Heart right ventricle (tissue), 16 donors: ENCODE measurements at regions of chr10 and their contacts with region 1.

Region 1: DNA sequence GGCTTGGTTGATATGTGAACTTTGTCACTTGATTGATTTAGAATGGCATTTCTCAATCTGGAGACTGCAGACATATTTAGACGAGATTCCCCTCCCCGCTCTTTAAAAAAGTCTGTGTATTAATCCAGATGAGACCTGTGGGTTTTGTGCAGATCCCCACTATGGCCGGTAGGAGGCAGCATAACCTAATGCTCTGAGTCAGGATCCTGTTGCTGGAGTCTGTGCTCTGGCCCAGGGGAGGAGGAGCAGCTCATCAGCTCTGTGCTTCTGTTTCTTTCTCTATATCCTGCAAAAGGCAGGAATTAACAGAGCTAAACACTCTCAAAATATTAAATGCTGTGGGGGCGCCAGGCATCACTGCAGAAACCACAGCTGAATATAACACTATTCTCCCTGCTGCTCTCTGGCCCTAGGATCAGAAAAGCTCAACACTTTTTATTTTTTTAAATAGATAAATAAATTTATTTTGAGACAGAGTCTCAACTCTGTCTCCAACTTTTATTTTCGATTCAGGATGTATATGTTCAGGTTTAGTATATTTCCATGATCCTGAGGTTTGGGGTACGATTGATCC is 23.9 kb upstream of the SEPHS1 start:
- DNase-seq: peak; percentile 28 to 68
- ATAC-seq: peak; percentile 84 to 95 (median 93)
- H3K4me3 ChIP-seq: no peak overlapping the region
- H3K27ac ChIP-seq: no peak overlapping the region
- H3K4me1 ChIP-seq: no peaks in the 10 kb centered on the region
- H3K27me3 ChIP-seq: no peaks in the 10 kb centered on the region
- CTCF ChIP-seq: peak; percentile 85 to 95 (median 90)

Region 2: GRCh38 chr10:13099666-13100348 is 272.2 kb before region 1 on chr10 and contains the start of gene OPTN:
- intact Hi-C with region 1: no loop called
- DNase-seq: peak; percentile 80 to 84
- ATAC-seq: peak; percentile 89 to 95 (median 93)
- H3K4me3 ChIP-seq: peak within 1 kb of the TSS; percentile 83 to 99 (median 96)
- H3K27ac ChIP-seq: peak within 1 kb of the TSS; percentile 87 to 99 (median 97)
- H3K4me1 ChIP-seq: peaks cover 2 to 43% (median 39%) of the 10 kb centered on the region in 9 donors
- H3K27me3 ChIP-seq: no peaks in the 10 kb centered on the region
- CTCF ChIP-seq: peak; percentile 38 to 85 (median 67)
- total RNA-seq, gene OPTN: 111 to 218 (median 133) TPM

Region 3: GRCh38 chr10:13234172-13234571 is 137.8 kb before region 1 on chr10 and contains the start of gene UCMA:
- intact Hi-C with region 1: no loop called
- DNase-seq: no peak
- ATAC-seq: no peak
- H3K4me3 ChIP-seq: no peak within 1 kb of the TSS
- H3K27ac ChIP-seq: no peak within 1 kb of the TSS
- H3K4me1 ChIP-seq: no peaks in the 10 kb centered on the region
- H3K27me3 ChIP-seq: peaks cover 0 to 31% (median 14%) of the 10 kb centered on the region in 7 donors
- CTCF ChIP-seq: no peak
- total RNA-seq, gene UCMA: not detected

Region 4: DNA sequence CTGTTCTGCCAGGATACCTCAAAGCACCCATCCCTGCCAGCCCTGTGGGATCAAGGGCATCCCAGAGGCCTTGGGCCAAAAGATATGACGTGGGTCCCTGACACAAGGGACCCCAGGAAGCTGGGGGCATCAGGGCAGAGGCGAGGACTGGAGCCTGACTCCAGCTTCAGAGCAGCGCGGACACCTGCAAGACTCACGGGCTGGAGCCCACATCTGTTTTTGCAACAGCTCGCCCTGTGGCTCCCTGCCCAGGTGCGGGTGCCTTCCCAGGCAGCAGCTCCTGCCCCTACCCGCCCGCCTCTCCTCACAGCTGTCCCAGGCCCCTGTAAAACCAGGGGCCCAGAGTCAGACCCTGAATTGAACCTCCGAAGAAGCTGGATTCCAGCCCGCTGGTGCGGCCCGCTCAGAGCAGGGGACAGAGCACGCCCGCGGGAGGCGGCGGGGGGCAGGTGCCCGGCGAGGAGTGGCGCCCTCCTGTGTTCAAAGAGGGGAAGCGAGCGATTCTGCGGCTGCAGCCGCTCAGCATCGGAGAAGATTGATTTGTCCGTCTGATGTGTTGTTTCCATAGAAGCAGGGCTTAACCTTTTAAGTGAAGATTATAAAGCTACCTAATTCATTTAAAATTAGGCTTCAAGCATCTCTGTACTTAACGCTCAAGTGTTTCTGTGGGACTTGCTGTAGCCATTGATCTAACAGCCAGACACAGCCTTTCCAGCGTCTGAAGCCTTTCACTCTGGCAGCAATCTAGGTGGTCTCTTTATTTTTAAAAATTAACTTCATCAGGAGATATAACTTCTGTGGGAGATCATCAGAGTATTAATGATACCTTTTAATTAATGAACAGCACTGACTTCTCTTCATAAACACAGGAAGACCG is 68.4 kb after region 1 on chr10:
- intact Hi-C with region 1: loop called in 9 of 10 experiments (anchors 1 to 5 kb)
- DNase-seq: peak; percentile 40 to 51
- ATAC-seq: peak; percentile 71 to 89 (median 80)
- H3K4me3 ChIP-seq: peak overlapping the region in 9 of 10 donors; percentile 21 to 48 (median 40)
- H3K27ac ChIP-seq: no peak overlapping the region
- H3K4me1 ChIP-seq: peaks cover 8 to 16% (median 14%) of the 10 kb centered on the region in 9 donors
- H3K27me3 ChIP-seq: peaks cover 0 to 53% (median 26%) of the 10 kb centered on the region in 7 donors
- CTCF ChIP-seq: peak; percentile 73 to 94 (median 88)

Region 5: DNA sequence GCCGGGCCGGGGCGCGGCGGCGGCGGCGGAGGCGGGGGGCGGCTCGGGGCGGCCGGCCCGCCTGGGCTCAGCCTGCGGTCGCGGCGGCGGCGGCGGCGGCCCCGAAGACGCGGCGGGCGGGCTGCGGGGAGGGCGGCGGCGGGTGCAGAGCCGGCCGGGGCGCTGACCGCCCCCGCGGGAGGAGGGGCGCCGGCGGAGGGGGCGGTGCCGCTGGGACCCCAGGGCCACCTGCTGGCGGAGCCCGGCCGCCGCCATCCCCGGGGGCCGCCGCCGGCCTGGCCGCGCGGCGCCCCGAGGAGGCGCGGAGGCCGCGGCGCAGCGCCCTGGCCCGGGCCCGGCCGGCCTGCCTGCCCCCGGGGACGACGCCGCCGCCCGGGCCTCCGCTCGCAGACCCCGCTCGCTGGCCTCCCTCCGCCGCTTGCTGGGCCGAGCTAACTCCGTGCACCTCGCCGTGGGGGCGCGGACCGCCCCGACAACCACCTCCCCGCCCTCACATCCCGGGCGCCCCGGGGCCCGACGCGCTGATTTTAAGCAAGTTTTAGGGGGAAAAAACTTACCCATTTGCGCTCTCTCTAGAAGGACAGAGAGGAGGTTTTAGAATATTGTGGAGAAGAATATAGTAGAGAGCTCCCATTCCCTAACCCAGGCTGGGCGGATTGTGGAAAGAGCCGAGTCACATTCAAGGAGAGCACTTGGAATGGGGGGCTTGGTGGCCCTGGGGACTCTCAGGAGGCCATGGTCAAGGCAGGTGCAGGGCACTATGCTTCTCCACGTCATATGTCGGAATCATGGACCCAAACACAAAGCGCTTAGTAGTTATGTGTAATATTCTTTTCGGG is 157.1 kb after region 1 on chr10 and contains the start of gene BEND7:
- intact Hi-C with region 1: loop called in 6 of 10 experiments (anchors 10 kb)
- DNase-seq: peak; percentile 27 to 67
- ATAC-seq: peak; percentile 77 to 91 (median 90)
- H3K4me3 ChIP-seq: peak within 1 kb of the TSS; percentile 44 to 89 (median 70)
- H3K27ac ChIP-seq: peak within 1 kb of the TSS; percentile 5 to 88 (median 69)
- H3K4me1 ChIP-seq: peaks cover 0 to 31% (median 18%) of the 10 kb centered on the region in 9 donors
- H3K27me3 ChIP-seq: peaks cover 0 to 62% (median 0%) of the 10 kb centered on the region in 7 donors
- CTCF ChIP-seq: no peak
- total RNA-seq, gene BEND7: 10.2 to 21.0 (median 13.3) TPM

Region 6: DNA sequence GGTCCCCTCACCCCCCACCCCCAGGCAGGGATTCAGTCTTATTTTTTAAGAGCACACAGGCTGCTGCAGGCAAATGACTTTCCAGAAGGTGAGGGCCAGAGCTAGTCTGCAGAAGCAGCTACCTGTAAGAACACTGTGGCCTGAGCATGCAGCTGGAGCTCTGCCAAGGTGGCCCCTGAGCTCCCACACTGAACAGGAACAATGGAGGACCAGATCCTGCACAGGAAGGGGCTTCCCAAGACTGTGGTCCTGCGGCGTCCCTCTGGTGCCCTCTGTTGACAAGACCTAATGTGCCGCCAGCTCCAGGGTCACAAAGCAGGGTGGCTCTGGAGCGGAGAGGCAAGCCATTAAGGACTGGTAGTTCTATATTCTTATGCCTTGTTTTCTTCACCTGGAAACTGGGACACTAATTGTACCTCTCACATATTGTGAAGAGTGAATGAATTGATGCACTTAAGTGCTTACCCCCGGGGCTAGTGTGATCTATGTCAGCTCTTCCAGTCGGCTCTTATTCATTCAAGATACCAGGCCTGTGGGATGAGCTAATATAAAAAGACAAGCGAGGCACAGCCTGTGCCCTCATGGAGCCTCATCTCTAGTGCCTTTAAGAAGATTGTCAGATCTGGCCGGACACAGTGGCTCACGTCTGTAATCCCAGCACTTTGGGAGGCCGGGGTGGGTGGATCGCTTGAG is 164.8 kb after region 1 on chr10:
- intact Hi-C with region 1: loop called in 7 of 10 experiments (anchors 2 to 10 kb)
- DNase-seq: peak; percentile 43 to 46
- ATAC-seq: peak; percentile 58 to 83 (median 75)
- H3K4me3 ChIP-seq: no peak overlapping the region
- H3K27ac ChIP-seq: no peak overlapping the region
- H3K4me1 ChIP-seq: peaks cover 0 to 3% (median 0%) of the 10 kb centered on the region in 9 donors
- H3K27me3 ChIP-seq: peaks cover 0 to 30% (median 19%) of the 10 kb centered on the region in 7 donors
- CTCF ChIP-seq: peak; percentile 40 to 70 (median 62)

Region 7: DNA sequence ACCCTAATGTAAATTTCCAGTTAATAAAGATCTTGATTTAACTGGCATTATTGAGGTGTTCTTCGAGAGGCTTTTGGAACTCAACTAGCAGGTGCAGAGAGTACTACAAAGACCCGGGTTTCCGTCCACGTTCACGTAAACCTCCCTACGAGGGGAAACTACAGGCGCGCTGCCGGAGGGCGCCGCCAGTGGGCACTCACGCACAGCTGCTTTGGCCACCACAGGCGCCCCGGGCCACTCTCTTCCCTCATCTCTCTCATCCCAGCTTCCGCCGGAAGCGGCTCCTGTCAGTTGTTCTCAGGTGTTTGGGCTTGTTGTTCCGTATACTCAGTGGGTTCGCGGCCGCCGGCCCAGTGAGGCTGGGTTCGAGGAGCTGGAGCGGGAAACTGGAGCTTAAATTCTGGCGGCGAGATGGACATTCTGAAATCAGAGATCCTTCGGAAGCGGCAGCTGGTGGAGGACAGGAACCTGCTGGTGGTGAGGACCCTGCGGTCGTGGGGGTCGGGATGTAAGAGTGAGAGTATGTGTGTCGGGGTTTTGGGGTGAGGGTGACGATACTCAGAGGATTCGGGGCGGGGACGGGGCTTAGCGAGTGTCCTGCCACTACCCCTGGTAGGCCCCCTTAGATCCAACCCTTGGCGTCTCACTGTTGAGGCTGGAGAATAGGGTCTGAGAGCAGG is 214.8 kb after region 1 on chr10 and contains the start of gene PRPF18:
- intact Hi-C with region 1: loop called in 3 of 10 experiments (anchors 1 to 10 kb)
- DNase-seq: peak; percentile 91 to 94
- ATAC-seq: peak; percentile 99 to 100 (median 99)
- H3K4me3 ChIP-seq: peak within 1 kb of the TSS; percentile 64 to 94 (median 79)
- H3K27ac ChIP-seq: peak within 1 kb of the TSS in 7 of 10 donors; percentile 49 to 79 (median 76)
- H3K4me1 ChIP-seq: peaks cover 3 to 29% (median 18%) of the 10 kb centered on the region in 9 donors
- H3K27me3 ChIP-seq: peaks cover 0 to 39% (median 16%) of the 10 kb centered on the region in 7 donors
- CTCF ChIP-seq: peak; percentile 89 to 100 (median 97)
- total RNA-seq, gene PRPF18: 13.3 to 17.1 (median 15.4) TPM

Region 8: DNA sequence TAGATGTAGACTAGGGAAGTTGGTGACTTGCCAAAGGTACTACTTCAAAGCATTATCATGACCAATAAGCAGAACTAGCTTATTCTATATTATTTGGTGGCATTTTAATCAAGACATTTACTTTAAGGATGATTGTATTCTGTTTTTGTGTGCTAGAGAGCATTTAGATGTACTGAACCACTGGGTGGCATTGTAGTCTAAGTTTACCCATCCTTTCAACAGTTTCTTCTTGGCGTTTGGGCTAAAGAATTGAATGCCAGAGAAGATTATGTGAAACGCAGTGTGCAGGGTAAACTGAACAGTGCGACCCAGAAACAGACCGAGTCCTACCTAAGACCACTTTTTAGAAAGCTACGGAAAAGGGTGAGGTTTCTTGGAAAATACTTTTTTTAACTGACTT is 241.5 kb after region 1 on chr10:
- intact Hi-C with region 1: no loop called
- DNase-seq: no peak
- ATAC-seq: peak in 7 of 8 donors; percentile 42 to 80 (median 65)
- H3K4me3 ChIP-seq: no peak overlapping the region
- H3K27ac ChIP-seq: no peak overlapping the region
- H3K4me1 ChIP-seq: peaks cover 0 to 15% (median 0%) of the 10 kb centered on the region in 9 donors
- H3K27me3 ChIP-seq: no peaks in the 10 kb centered on the region
- CTCF ChIP-seq: peak; percentile 25 to 65 (median 47)

Region 9: DNA sequence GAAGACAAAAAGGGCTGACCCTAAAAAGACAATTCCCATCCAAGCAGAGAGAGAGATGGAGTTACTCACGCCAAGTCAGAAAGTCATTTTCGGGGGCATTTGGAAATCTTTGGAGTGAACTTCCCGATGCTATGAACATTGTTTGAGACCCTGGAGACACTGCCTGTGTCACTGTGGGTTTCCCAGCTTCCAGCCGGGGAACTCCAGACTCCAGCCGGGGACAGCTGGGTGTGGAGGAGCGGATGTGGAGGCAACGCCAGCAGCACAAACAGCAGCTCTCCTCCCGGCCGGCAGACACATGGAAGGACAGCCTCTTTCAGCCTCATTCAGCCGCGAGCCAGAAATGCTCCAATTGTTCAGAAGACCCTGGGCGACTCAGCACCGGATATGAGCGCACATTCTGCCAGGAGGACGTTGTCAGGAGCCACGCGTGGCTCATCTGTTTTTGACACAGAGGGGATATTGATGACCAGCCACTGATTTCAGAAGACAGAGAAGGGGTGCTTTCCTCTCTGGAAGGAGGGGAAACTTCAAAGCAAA is 312.3 kb after region 1 on chr10:
- intact Hi-C with region 1: no loop called
- DNase-seq: peak; percentile 82 to 91
- ATAC-seq: peak; percentile 67 to 89 (median 78)
- H3K4me3 ChIP-seq: peak overlapping the region in 2 of 10 donors; percentile 1 to 9
- H3K27ac ChIP-seq: peak overlapping the region; percentile 59 to 95 (median 86)
- H3K4me1 ChIP-seq: peaks cover 8 to 65% (median 51%) of the 10 kb centered on the region in 9 donors
- H3K27me3 ChIP-seq: no peaks in the 10 kb centered on the region
- CTCF ChIP-seq: no peak